ENCODE measurements at regions of chr4 and their contacts with region 1.

Region 1: GRCh38 chr4:74675673-74676279 is 118.5 kb downstream of the BTC start:
- DNase-seq: peak; percentile 38
- H3K4me3 ChIP-seq: no peak overlapping the region
- H3K27ac ChIP-seq: no peak overlapping the region
- H3K27me3 ChIP-seq: no peaks in the 10 kb centered on the region
- CTCF ChIP-seq: peak; percentile 89

Region 2: DNA sequence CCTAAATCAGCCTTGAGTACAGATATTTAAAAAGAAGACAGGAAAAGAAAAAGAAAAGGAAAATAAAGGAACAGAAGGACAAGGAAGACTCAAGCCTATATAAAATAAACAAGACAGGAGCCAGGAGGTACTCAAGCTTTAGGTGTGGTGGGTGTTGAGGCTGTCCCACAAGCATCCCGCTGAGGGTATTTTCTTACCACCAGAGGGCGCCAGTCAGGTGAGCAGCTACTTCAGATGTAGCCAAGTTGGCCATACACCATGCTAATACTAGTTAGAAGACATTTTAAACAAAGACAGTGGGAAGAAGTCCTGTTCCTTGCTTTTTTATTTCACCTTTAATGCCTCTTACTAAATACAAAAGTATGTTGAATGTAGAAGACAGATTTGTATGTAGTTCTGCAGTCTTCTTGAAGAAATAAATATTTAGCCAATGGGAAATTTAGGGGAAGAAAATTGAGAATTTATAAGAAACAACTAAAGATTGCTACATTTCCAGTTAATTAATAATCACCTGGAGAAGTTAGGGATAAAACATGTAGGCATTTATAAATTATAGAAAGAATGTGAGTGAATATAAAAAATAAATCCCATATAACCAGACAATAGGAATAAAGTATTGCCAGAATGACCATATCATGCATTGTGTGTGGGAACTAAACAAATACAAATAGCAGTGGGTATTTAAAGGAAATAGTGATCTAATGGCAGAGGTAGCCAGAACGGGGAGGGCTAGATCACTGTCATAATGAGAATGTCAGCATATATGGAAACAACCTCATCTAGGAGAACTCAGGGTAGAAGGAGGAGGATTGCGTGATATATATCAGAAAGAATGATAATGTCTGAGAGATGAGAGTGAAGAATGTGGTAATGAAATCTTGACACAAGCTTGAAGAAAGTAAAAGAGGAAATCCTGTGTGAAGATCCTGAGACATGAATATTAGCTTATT is 446.8 kb before region 1 on chr4:
- CTCF ChIA-PET with region 1: interaction called, 20 read pairs
- POLR2A ChIA-PET with region 1: no interaction called
- DNase-seq: peak; percentile 30
- H3K4me3 ChIP-seq: no peak overlapping the region
- H3K27ac ChIP-seq: no peak overlapping the region
- H3K27me3 ChIP-seq: no peaks in the 10 kb centered on the region
- CTCF ChIP-seq: peak; percentile 87

Region 3: DNA sequence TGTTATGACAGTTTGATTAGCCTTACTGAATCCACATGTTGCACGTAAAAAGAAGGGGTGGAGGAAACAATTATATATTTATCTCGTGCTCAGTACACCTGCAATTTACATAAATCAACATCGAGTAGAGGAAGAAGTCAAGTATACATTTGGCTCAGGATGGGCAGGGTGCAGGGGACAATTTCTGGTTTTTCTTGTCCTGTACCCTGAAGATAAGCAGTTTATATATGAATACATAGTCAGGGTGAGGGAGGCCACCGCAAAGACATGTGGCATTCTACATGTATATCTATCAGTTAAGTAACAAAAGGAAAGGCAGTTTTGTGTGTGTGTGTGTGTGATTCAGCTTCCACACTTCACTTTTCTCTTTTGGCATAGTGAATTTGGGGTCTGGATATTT is 321.9 kb before region 1 on chr4:
- CTCF ChIA-PET with region 1: interaction called, 13 read pairs
- POLR2A ChIA-PET with region 1: no interaction called
- DNase-seq: no peak
- H3K4me3 ChIP-seq: no peak overlapping the region
- H3K27ac ChIP-seq: no peak overlapping the region
- H3K27me3 ChIP-seq: no peaks in the 10 kb centered on the region
- CTCF ChIP-seq: no peak

Region 4: DNA sequence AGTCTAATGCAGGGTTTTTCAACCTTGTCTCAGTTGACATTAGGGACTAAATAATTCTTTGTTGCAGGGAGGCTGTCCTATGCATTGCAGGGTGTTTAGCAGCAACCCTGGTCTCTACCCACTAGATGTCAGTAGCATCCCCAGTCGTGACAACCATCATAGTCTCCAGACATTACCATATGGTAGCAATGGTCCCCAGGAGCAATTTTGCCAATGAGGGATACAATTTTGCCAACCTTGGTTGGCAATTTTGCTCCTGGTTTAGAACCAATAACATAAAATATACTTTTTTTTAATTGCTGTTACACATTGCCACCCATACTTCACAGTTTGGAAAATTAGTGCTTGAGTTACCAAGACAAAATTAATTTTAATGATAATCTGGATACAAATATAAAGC is 304.9 kb before region 1 on chr4:
- CTCF ChIA-PET with region 1: interaction called, 148 read pairs
- POLR2A ChIA-PET with region 1: interaction called, 6 read pairs
- DNase-seq: no peak
- H3K4me3 ChIP-seq: no peak overlapping the region
- H3K27ac ChIP-seq: no peak overlapping the region
- H3K27me3 ChIP-seq: no peaks in the 10 kb centered on the region
- CTCF ChIP-seq: peak; percentile 89

Region 5: DNA sequence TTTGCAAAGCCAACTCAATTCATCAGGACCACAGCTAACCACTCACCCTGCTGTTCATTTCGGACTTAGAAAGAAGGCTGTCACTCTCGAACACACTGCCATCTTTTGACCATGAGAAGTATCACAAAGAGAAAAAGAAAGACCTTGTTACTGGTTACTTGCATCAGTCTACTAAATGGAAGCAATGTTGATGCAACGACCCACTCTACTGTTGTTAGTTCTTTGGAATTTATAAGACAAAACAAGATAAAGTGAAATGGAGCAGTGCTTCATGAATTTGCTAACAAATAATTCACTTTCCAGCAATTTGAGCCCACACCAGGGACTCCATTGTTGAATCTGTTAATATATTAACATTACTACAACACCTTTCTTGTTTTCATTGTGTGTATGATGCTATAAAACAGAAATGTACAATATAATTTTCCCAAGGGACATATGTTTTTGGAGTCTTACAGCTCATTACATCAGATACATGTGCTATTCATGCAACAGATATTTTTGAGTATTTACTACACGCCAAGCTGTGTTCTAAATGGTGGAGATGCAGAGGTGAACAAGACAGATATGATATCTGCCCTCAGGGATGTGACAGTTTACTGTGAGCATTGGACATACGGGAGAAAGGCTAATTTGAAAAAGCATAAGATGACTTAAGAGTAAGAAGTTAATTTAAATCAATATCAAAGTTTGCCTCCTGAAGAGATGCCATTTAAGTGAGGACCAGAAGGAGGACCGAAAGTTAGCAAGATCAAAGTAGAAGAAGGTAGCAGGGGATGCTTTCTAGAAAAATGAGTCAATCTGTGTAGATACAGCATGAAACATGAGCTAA is 143.6 kb before region 1 on chr4:
- CTCF ChIA-PET with region 1: interaction called, 21 read pairs
- POLR2A ChIA-PET with region 1: no interaction called
- DNase-seq: peak; percentile 59
- H3K4me3 ChIP-seq: no peak overlapping the region
- H3K27ac ChIP-seq: no peak overlapping the region
- H3K27me3 ChIP-seq: no peaks in the 10 kb centered on the region
- CTCF ChIP-seq: peak; percentile 64

Measured in AG04450 (cell line).